ENCODE measurements at regions of chr2 and their contacts with region 1.

Region 1: DNA sequence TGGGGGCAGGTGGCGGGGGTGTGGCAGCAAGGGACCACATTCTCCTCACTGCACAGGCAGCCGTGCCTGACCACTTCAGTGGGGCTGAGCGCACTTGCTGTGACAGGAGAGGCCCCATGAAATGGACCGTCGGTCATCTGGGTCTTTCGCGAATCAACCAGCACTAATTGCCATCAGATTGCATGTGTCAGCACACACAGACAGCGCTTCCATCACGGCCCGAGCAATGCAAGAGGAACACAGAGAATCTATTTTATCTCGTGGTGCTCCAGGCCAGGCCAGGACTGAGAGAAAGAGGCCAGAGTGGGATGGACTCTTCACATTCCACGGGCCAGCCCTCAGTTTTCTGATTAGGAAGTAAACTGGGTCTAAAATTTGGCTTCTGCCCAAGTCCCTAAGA is 87.0 kb downstream of the EIPR1 start:
- DNase-seq: no peak
- ATAC-seq: no peak
- H3K4me3 ChIP-seq: no peak overlapping the region
- H3K27ac ChIP-seq: no peak overlapping the region
- H3K4me1 ChIP-seq: no peaks in the 10 kb centered on the region
- H3K27me3 ChIP-seq: no peaks in the 10 kb centered on the region
- CTCF ChIP-seq: no peak

Region 2: DNA sequence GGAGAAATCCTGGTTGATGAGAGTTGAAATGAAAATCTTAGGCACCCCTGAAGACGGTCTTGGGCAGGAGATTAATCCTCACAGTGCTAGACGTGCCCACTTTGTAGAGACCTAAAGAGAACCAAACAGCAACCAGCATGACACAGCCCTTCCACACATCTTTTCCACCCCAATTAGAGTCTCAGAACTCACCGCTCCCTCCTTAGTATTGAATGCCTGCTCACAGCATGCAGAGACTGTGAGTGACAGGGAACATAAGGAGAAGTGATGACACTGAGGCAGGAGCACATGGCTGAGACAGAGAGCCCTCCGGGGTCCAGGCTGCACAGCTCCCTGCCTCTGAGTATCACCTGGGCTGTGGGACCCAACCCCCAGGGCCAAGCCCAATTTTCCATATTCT is 280.7 kb before region 1 on chr2:
- intact Hi-C with region 1: loop called in 1 of 10 experiments (anchors 10 kb)
- DNase-seq: no peak
- ATAC-seq: no peak
- H3K4me3 ChIP-seq: no peak overlapping the region
- H3K27ac ChIP-seq: no peak overlapping the region
- H3K4me1 ChIP-seq: no peaks in the 10 kb centered on the region
- H3K27me3 ChIP-seq: peaks cover 0 to 42% (median 24%) of the 10 kb centered on the region in 7 donors
- CTCF ChIP-seq: no peak

Region 3: GRCh38 chr2:3264010-3264744 is 26.5 kb before region 1 on chr2:
- intact Hi-C with region 1: no loop called
- DNase-seq: no peak
- ATAC-seq: peak in 4 of 8 donors; percentile 41 to 61 (median 47)
- H3K4me3 ChIP-seq: no peak overlapping the region
- H3K27ac ChIP-seq: no peak overlapping the region
- H3K4me1 ChIP-seq: peaks cover 0 to 7% (median 0%) of the 10 kb centered on the region in 9 donors
- H3K27me3 ChIP-seq: no peaks in the 10 kb centered on the region
- CTCF ChIP-seq: no peak